Aorta (tissue), 5 donors: ENCODE measurements at regions of chr2 and their contacts with region 1.

Region 1: DNA sequence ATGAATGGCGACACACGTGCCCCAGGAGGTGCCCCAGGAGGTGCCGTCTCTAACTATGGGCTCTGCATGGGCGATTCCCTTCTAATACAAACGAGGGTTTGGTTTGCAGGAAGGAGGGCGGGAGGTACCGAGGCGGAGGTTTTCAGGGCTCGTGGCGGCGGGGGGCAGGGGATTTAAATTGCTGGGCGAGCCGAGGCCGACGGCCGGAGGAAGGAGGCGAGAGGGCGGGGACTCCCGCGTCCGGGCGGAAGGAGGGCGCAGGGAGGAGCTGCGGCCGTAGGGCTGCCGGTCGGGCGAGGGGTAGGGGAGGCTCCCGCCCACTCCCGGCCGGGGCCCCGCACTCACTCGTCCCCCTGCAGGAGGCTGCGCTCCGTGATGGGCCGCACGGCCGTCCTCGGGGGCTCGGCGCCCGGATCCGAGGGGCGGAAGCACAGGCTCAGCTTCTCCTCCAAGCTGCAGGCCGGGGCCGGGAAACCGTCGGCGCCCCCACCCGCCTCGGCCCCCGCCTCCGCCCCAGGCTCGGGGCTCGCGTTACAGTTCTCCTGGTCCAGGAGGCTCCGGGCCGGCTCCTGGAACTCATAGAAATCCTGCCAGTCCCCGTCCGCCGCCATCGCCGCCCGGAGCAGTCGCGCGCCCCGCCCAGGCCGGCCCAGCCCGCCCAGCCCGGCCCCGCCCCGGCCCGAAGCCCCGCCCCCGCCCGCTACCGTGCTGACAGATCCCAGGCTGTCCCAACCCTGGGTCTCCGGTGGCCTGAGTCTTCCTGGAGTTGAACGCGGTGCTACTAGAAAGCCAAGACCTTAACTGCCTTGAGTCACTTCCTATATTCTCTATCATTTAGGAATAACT is at the start of gene FEZ2:
- DNase-seq: peak; percentile 84 to 91
- ATAC-seq: peak; percentile 97
- H3K4me3 ChIP-seq: peak within 1 kb of the TSS; percentile 95 to 97
- H3K27ac ChIP-seq: peak within 1 kb of the TSS; percentile 52 to 80
- H3K4me1 ChIP-seq: peaks cover 0 to 4% of the 10 kb centered on the region in 2 donors
- H3K27me3 ChIP-seq: no peaks in the 10 kb centered on the region
- total RNA-seq, gene FEZ2: 59.3 to 59.4 TPM

Region 2: DNA sequence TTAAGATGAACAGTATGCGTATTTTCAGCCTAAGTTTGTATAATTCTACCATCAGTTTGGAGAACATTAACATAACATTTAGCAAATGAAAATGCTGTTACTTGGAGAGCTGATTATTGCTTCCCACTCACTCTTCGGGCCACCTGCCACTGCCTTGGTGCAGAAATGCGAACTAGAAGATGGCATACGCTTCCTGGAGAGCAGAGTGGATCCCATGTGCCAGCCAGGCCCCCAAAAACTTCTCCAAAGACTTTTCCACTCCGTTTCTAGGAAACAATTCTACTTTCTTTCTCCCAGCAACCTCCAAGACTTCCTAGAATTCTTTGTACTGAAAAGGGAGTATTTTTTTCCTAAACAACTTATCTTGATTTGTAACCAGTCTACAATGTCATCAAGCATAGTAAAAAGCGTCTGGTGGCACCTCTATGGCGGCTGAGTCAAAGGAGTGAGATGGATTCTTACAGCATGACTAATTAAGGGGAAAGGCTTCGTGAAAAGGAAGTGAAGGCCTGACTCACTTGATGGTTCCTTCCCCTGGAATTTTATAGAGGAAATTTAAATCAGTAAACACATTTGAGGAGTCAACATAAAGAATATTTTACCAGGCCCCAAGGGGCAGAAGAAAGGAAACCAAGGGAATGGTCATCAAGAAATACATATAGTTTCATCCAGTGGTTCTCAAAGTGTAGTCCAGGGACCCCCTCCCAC is 36.4 kb before region 1 on chr2:
- intact Hi-C with region 1: loop called in 1 of 2 experiments (anchors 5 kb)
- DNase-seq: no peak
- ATAC-seq: peak; percentile 57
- H3K4me3 ChIP-seq: no peak overlapping the region
- H3K27ac ChIP-seq: peak overlapping the region in 1 of 2 donors; percentile 96
- H3K4me1 ChIP-seq: peaks cover 0 to under 1% of the 10 kb centered on the region in 2 donors
- H3K27me3 ChIP-seq: no peaks in the 10 kb centered on the region

Region 3: GRCh38 chr2:36572054-36572718 is 25.6 kb before region 1 on chr2:
- intact Hi-C with region 1: no loop called
- DNase-seq: no peak
- ATAC-seq: no peak
- H3K4me3 ChIP-seq: no peak overlapping the region
- H3K27ac ChIP-seq: no peak overlapping the region
- H3K4me1 ChIP-seq: peaks cover 0 to 2% of the 10 kb centered on the region in 2 donors
- H3K27me3 ChIP-seq: no peaks in the 10 kb centered on the region

Region 4: GRCh38 chr2:36633470-36634092 is 35.8 kb after region 1 on chr2:
- intact Hi-C with region 1: no loop called
- DNase-seq: no peak
- ATAC-seq: no peak
- H3K4me3 ChIP-seq: no peak overlapping the region
- H3K27ac ChIP-seq: no peak overlapping the region
- H3K4me1 ChIP-seq: peaks cover 3 to 5% of the 10 kb centered on the region in 2 donors
- H3K27me3 ChIP-seq: no peaks in the 10 kb centered on the region